ENCODE measurements at regions of chr17 and their contacts with region 1.

Region 1: GRCh38 chr17:41648411-41649195 is 24.2 kb upstream of the KRT17 start:
- DNase-seq: peak; percentile 79 to 85 (median 81)
- H3K4me3 ChIP-seq: peak overlapping the region; percentile 18 to 75 (median 46)
- H3K27ac ChIP-seq: no peak overlapping the region
- H3K4me1 ChIP-seq: peaks cover 0 to 34% (median 29%) of the 10 kb centered on the region in 4 experiments
- H3K27me3 ChIP-seq: no peaks in the 10 kb centered on the region

Region 2: GRCh38 chr17:40854159-40854814 is 794.3 kb before region 1 on chr17:
- CTCF ChIA-PET with region 1: interaction called, 15 read pairs
- POLR2A ChIA-PET with region 1: no interaction called
- DNase-seq: peak in 2 of 3 donors; percentile 14
- H3K4me3 ChIP-seq: no peak overlapping the region
- H3K27ac ChIP-seq: no peak overlapping the region
- H3K4me1 ChIP-seq: no peaks in the 10 kb centered on the region
- H3K27me3 ChIP-seq: peaks cover 0 to 16% (median 12%) of the 10 kb centered on the region in 5 experiments

Region 3: GRCh38 chr17:41610965-41611640 is 37.5 kb before region 1 on chr17:
- CTCF ChIA-PET with region 1: interaction called, 10 read pairs
- POLR2A ChIA-PET with region 1: no interaction called
- DNase-seq: no peak
- H3K4me3 ChIP-seq: no peak overlapping the region
- H3K27ac ChIP-seq: no peak overlapping the region
- H3K4me1 ChIP-seq: no peaks in the 10 kb centered on the region
- H3K27me3 ChIP-seq: peaks cover 0 to 6% (median 2%) of the 10 kb centered on the region in 5 experiments

Region 4: GRCh38 chr17:41658846-41659245 is 10.2 kb after region 1 on chr17:
- CTCF ChIA-PET with region 1: interaction called, 239 read pairs
- POLR2A ChIA-PET with region 1: interaction called, 3 read pairs
- DNase-seq: peak in 2 of 3 donors; percentile 52 to 61
- H3K4me3 ChIP-seq: no peak overlapping the region
- H3K27ac ChIP-seq: no peak overlapping the region
- H3K4me1 ChIP-seq: peaks cover 0 to 20% (median 11%) of the 10 kb centered on the region in 4 experiments
- H3K27me3 ChIP-seq: no peaks in the 10 kb centered on the region

Region 5: DNA sequence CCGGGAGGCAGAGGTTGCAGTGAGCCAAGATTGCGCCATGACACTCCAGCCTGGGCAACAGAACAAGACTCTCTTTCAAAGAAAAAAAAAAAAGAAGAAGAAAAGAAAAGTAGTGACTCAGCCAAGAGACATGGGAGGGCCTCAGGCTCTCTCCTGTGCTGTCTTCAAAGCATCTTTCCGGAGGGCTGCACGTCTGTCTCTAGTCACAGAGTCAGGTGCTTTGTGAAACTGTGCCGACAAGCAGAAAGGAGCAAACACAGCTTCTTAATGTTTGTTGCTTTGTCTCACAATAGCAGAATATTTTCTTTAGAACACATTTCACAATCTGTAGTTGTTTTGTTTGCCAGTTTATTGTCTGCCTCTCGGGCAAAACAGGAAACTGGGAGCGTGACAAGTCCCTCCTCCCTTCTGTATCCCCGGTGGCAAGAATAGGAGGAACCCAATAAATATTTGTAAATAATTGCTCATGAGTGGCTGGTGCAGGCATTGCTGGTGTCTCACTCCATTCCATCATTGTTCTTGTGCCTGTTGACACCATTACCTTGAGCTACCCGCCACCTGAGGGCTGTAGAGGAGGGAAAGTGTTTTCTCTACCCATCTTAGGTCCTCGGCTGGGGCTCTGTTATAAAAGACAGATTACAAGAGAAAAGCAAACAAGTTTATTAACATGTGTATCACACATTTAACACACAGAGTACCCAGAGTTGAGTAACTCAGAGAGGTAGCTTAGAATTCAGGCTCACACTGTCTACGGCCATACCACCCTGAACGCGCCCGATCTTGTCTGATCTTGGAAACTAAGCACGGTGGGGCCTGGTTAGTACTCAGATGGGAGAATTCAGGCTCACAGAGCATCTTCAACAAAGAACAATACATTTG is 69.0 kb after region 1 on chr17:
- CTCF ChIA-PET with region 1: no interaction called
- POLR2A ChIA-PET with region 1: no interaction called
- DNase-seq: no peak
- H3K4me3 ChIP-seq: no peak overlapping the region
- H3K27ac ChIP-seq: no peak overlapping the region
- H3K4me1 ChIP-seq: no peaks in the 10 kb centered on the region
- H3K27me3 ChIP-seq: peaks cover 0 to 2% (median 0%) of the 10 kb centered on the region in 5 experiments

Measured in common myeloid progenitor, CD34-positive (primary cell).